ENCODE measurements at regions of chr10 and their contacts with region 1.

Region 1: GRCh38 chr10:69237528-69238159 is 17.5 kb downstream of the HKDC1 start:
- DNase-seq: peak; percentile 93
- ATAC-seq: peak; percentile 99

Region 2: GRCh38 chr10:68924593-68924992 is 313.1 kb before region 1 on chr10:
- intact Hi-C with region 1: no loop called
- DNase-seq: no peak
- ATAC-seq: no peak

Region 3: GRCh38 chr10:69215405-69216176 is 22.1 kb before region 1 on chr10:
- intact Hi-C with region 1: no loop called
- DNase-seq: no peak
- ATAC-seq: no peak

Region 4: DNA sequence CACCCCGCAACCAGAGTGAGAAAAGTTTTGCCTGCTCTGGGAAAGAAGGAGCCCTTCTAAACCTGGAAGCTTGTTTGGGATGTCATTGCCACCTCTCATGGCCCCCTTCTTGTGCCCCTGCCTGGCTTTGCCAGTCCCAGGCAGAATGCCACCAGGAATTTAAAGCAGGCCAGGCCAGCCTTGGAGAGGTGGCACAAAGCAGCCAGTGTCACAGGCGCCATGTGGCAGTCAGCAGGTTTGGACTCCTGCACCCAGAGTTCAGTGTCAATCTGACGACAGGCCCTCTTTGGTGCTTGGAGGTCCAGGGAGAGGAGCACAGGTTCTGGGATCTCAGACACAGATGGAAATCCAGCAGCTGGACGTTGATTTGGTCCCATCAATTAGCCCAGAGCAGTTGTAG is 53.3 kb after region 1 on chr10:
- intact Hi-C with region 1: no loop called
- DNase-seq: peak; percentile 45
- ATAC-seq: peak; percentile 72

Region 5: GRCh38 chr10:69392481-69393000 is 154.9 kb after region 1 on chr10:
- intact Hi-C with region 1: loop called (anchors 5 kb)
- DNase-seq: peak; percentile 88
- ATAC-seq: peak; percentile 89

Measured in left ventricle myocardium superior (tissue), 1 donor.